ENCODE measurements at regions of chr5 and their contacts with region 1.

Region 1: GRCh38 chr5:14685757-14686156 is 21.2 kb downstream of the OTULIN start:
- DNase-seq: peak; percentile 48
- ATAC-seq: peak; percentile 74
- H3K4me3 Mint-ChIP-seq: no peak overlapping the region
- H3K27ac Mint-ChIP-seq: peak overlapping the region; percentile 37
- H3K4me1 Mint-ChIP-seq: peaks cover 26% of the 10 kb centered on the region
- H3K27me3 Mint-ChIP-seq: no peaks in the 10 kb centered on the region

Region 2: GRCh38 chr5:14650052-14650451 is 35.7 kb before region 1 on chr5:
- CTCF ChIA-PET with region 1: interaction called, 21 read pairs
- POLR2A ChIA-PET with region 1: no interaction called
- DNase-seq: no peak
- ATAC-seq: no peak
- H3K4me3 Mint-ChIP-seq: no peak overlapping the region
- H3K27ac Mint-ChIP-seq: no peak overlapping the region
- H3K4me1 Mint-ChIP-seq: peaks cover 16% of the 10 kb centered on the region
- H3K27me3 Mint-ChIP-seq: peaks cover 25% of the 10 kb centered on the region

Region 3: GRCh38 chr5:14664302-14665100 is 21.3 kb before region 1 on chr5 and contains the start of gene OTULIN:
- CTCF ChIA-PET with region 1: interaction called, 43 read pairs
- POLR2A ChIA-PET with region 1: no interaction called
- DNase-seq: peak; percentile 91
- ATAC-seq: peak; percentile 73
- H3K4me3 Mint-ChIP-seq: peak within 1 kb of the TSS; percentile 94
- H3K27ac Mint-ChIP-seq: peak within 1 kb of the TSS; percentile 98
- H3K4me1 Mint-ChIP-seq: peaks cover 73% of the 10 kb centered on the region
- H3K27me3 Mint-ChIP-seq: no peaks in the 10 kb centered on the region
- total RNA-seq, gene OTULIN: 71.2 to 80.7 TPM

Region 4: GRCh38 chr5:14700478-14701436 is 15.0 kb after region 1 on chr5:
- CTCF ChIA-PET with region 1: interaction called, 40 read pairs
- POLR2A ChIA-PET with region 1: interaction called, 4 read pairs
- DNase-seq: no peak
- ATAC-seq: no peak
- H3K4me3 Mint-ChIP-seq: no peak overlapping the region
- H3K27ac Mint-ChIP-seq: peak overlapping the region; percentile 78
- H3K4me1 Mint-ChIP-seq: peaks cover 53% of the 10 kb centered on the region
- H3K27me3 Mint-ChIP-seq: no peaks in the 10 kb centered on the region

Region 5: DNA sequence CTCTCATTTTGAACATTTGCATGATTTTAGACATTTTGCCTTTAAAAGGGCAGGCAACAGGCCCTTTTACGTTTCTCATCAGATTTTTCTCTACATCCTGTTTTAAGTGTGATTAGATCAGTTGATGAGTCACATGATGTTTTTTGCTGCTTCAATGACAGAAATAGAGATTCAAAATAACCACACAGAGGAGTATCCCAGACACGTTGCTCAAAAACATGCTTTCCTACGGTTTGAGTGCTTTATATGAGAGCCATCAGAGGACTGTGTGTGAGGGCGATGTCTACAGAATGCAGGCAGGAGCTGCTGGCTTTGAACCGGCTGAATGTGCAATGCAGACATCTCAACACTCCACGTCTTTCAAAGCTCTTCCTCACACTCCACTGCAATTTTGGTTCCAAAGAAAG is 20.9 kb after region 1 on chr5:
- CTCF ChIA-PET with region 1: interaction called, 40 read pairs
- POLR2A ChIA-PET with region 1: interaction called, 4 read pairs
- DNase-seq: peak; percentile 51
- ATAC-seq: peak; percentile 93
- H3K4me3 Mint-ChIP-seq: peak overlapping the region; percentile 56
- H3K27ac Mint-ChIP-seq: peak overlapping the region; percentile 97
- H3K4me1 Mint-ChIP-seq: peaks cover 78% of the 10 kb centered on the region
- H3K27me3 Mint-ChIP-seq: no peaks in the 10 kb centered on the region

Region 6: DNA sequence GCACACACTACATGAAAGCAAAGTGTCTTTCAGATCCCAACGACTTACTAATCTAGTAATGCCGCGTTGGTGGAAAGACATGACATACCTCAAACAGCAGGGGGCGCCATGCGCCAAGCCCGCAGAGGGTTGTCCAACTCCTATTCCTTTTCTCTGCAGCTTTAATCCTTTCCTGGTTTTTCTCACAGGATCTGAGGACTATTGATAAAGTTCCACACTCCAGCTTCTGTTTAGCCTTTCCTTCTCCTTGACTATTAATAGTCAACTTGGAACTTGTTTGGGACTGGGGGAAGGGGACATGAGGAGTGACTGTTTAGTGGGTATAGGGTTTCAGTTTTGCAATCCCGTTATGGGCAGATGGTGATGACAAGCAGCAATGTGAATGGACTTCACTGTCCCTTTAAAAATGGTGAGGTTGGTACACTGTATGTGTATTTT is 41.7 kb after region 1 on chr5:
- CTCF ChIA-PET with region 1: interaction called, 10 read pairs
- POLR2A ChIA-PET with region 1: no interaction called
- DNase-seq: peak; percentile 83
- ATAC-seq: peak; percentile 77
- H3K4me3 Mint-ChIP-seq: no peak overlapping the region
- H3K27ac Mint-ChIP-seq: no peak overlapping the region
- H3K4me1 Mint-ChIP-seq: peaks cover 2% of the 10 kb centered on the region
- H3K27me3 Mint-ChIP-seq: no peaks in the 10 kb centered on the region

Region 7: DNA sequence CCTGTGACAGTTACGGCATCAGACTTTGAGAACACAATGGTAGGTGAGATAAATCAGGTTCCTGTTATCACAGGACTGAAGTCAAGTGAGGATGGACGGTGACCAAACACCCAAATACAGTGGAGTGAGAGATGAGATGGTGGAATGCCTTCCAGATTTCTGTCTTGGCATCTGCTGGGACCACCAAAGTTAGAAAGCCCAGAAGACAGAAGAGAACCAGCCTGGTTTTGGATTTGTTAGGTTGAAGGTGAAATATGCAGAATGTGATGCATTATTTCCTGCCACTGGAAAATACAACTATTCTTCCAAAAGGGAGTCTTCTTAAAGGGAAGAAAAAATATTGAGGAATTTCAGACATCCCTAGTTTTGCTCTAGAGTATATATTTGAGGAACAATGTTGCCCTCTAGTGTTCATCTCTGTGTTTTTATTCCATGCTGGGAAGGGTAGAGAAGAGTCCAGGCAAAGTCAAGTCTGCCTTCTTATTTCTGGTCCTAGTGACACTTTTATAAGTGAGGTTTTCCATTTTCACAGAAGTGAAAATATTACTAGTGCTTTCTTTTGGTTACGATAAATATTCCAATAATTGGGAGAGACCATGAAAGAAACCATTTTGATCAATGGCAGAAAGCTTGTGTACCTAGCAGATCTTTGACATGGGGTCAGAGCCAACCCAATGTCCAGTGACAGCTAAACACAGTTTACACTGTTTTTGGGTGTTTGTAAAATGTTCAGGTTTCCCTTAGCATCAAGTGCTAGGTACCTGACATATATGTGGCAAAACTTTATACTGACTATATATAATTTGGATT is 328.1 kb after region 1 on chr5:
- CTCF ChIA-PET with region 1: interaction called, 10 read pairs
- POLR2A ChIA-PET with region 1: no interaction called
- DNase-seq: no peak
- ATAC-seq: peak; percentile 57
- H3K4me3 Mint-ChIP-seq: no peak overlapping the region
- H3K27ac Mint-ChIP-seq: no peak overlapping the region
- H3K4me1 Mint-ChIP-seq: peaks cover 1% of the 10 kb centered on the region
- H3K27me3 Mint-ChIP-seq: peaks cover 6% of the 10 kb centered on the region